ENCODE measurements at regions of chr9 and their contacts with region 1.

Region 1: DNA sequence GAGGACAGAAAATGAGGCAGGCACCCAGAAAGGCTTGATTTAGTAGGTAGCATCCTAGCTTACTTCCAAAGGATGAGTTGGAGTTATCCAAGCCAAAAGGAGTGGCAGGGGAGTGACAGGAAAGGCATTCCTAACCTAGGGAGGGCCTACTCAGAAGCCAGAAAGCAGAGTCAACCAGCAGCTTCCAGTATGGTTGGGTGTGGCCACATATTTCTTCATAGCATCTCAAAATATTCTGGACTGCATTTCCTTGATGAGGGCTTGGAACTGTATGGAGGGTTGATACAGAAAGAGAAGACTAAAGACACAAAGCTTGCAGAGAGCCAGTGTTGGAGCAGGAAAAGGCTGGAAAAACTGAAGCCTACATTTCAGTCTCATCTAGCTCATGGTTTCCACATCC is 656.8 kb upstream of the DMAC1 start:
- DNase-seq: no peak
- H3K4me3 ChIP-seq: no peak overlapping the region
- H3K27ac ChIP-seq: no peak overlapping the region
- H3K4me1 ChIP-seq: no peaks in the 10 kb centered on the region
- H3K27me3 ChIP-seq: no peaks in the 10 kb centered on the region
- CTCF ChIP-seq: no peak
- POLR2A ChIP-seq: no peak

Region 2: DNA sequence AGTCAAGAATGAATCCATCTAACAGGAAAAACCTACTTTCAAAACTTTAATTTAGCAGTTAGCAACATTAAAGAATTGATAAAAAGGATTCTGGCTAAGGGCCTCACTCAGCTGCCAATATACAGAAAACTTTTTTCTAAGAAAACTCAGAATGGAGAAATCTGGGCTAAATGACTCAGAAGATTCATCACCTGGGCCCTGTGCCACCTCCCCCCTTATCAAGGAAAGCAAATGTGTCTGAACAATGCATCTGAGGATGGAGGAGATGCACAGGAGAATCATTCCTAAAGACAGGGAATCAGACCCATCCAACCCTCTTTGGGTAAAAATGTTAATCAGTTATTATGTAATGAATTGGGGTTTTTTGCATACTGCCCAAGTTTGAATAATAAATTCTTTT is 64.8 kb before region 1 on chr9:
- intact Hi-C with region 1: loop called in 1 of 2 experiments (anchors 10 kb)
- DNase-seq: no peak
- H3K4me3 ChIP-seq: no peak overlapping the region
- H3K27ac ChIP-seq: no peak overlapping the region
- H3K4me1 ChIP-seq: no peaks in the 10 kb centered on the region
- H3K27me3 ChIP-seq: no peaks in the 10 kb centered on the region
- CTCF ChIP-seq: no peak
- POLR2A ChIP-seq: no peak

Region 3: DNA sequence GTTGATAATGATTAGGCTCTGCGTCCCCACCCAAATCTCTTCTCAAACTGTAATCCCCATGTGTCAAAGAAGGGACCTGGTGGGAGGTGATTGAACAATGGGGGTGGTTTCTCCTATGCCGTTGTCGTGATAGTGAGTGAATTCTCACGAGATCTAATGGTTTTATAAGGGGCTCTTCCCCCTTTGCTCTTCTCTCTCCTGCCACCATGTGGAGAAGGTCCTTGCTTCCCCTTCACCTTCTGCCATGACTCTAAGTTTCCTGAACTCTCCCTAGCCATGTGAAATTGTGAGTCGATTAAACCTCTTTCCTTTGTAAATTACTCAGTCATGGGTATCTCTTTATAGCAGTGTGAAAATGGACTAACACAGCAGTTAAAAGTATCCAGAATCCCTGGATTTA is 58.4 kb after region 1 on chr9:
- intact Hi-C with region 1: no loop called
- DNase-seq: no peak
- H3K4me3 ChIP-seq: no peak overlapping the region
- H3K27ac ChIP-seq: no peak overlapping the region
- H3K4me1 ChIP-seq: no peaks in the 10 kb centered on the region
- H3K27me3 ChIP-seq: no peaks in the 10 kb centered on the region
- CTCF ChIP-seq: no peak
- POLR2A ChIP-seq: no peak

Region 4: GRCh38 chr9:8533681-8534080 is 77.3 kb after region 1 on chr9:
- intact Hi-C with region 1: no loop called
- DNase-seq: no peak
- H3K4me3 ChIP-seq: no peak overlapping the region
- H3K27ac ChIP-seq: no peak overlapping the region
- H3K4me1 ChIP-seq: no peaks in the 10 kb centered on the region
- H3K27me3 ChIP-seq: no peaks in the 10 kb centered on the region
- CTCF ChIP-seq: no peak
- POLR2A ChIP-seq: no peak

Measured in adrenal gland (tissue), 19 donors.